Posterior vena cava (tissue), 2 donors: ENCODE measurements at regions of chr2 and their contacts with region 1.

Region 1: DNA sequence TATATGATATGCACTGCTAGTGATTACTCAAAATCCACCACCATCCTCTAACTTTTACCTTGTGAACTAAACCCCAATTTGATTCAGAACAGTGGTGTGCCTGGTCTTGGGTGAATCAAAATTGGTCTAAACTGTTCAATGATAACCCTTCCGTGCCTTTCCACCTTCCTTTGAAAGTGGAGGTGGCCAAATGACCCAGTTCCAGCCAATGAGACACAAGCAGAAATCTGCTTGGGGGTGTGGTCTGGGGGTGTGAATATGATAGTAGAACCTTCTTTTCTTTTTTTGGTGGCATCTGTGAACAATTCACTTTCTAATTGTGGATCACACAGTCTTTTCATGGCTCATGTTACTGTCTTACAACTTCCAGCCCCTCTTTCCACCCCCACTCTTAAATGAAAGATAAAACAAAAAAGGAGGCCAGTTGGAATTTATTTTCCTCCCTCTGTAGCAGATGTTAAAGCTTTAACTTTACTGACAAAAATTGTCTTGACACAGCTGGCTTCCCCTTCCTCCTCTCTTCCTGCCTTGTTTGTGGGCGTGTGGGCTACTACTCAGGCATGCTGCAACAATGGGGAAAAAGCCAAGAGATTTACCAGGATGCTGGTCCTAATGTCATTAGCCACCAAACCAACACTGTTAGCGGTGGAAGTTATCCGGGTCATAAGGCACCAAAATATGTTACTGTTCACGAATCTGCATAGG is 58.8 kb upstream of the ANKRD44 start:
- DNase-seq: no peak

Region 2: GRCh38 chr2:197332641-197333040 is 36.7 kb before region 1 on chr2:
- intact Hi-C with region 1: loop called in 1 of 2 experiments (anchors 2 kb)
- DNase-seq: no peak

Region 3: DNA sequence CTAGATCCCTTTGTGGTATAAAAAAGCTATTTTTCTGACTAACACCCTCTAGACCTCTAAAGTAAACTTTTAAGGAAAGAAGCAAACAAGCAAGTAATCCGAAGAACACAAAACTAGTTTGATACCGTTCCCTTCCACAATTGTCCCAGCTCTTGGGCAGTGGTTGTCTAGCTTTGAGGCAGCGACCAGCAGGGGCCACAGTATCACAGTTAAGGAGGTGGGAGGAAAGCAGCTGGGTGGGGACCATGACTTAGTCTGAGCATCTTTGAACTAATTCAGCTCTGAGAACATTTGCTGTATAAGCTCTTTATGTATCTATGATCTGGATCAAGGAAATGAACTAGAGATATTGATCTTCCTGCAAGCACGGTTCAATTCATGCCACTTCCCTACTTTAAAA is 14.4 kb after region 1 on chr2:
- intact Hi-C with region 1: no loop called
- DNase-seq: no peak

Region 4: GRCh38 chr2:197399887-197400540 is 30.6 kb after region 1 on chr2:
- intact Hi-C with region 1: no loop called
- DNase-seq: no peak

Region 5: GRCh38 chr2:198322294-198322693 is 952.9 kb after region 1 on chr2:
- intact Hi-C with region 1: no loop called
- DNase-seq: no peak